ENCODE measurements at regions of chr9 and their contacts with region 1.

Region 1: DNA sequence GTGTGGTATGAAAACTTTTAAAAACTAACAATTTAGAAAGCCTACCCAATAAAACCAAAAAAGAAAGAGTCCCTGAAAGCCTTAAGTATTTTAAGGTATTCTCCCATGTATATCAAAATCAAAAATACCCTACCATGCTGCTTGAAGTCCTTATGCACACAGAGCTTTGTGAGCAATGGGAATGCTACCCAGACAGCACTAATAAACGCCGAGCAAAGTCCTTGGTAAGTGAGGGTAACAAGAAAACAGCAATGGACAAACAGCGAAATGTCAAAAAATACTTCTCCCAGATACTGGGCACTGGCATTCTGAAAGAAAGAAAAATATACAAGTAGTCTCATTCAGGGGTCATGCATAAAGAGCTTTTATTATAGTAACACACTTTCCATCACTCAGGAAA is 27.4 kb downstream of the ERMP1 start:
- DNase-seq: no peak
- ATAC-seq: no peak
- H3K4me3 Mint-ChIP-seq: no peak overlapping the region
- H3K27ac Mint-ChIP-seq: no peak overlapping the region
- H3K4me1 Mint-ChIP-seq: peaks cover 10% of the 10 kb centered on the region
- H3K27me3 Mint-ChIP-seq: no peaks in the 10 kb centered on the region

Region 2: DNA sequence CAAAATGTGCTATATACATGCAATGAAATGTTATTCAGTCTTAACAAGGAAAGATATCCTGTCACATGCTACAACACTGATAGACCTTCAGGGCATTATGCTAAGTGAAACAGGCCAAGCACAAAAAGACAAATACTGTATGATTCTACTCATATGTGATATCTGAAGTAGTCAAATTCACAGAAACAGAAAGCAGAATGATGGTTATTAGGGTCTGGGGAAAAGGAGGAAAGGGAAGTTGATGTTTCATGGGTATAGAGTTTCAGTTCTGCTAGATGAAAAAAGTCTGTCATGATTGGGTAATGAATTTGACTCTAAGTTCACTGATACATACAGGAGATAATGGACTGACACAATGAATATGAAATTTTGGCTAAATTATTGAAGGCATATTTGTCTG is 187.7 kb before region 1 on chr9:
- CTCF ChIA-PET with region 1: no interaction called
- POLR2A ChIA-PET with region 1: interaction called, 14 read pairs
- intact Hi-C with region 1: no loop called
- DNase-seq: no peak
- ATAC-seq: peak; percentile 86
- H3K4me3 Mint-ChIP-seq: no peak overlapping the region
- H3K27ac Mint-ChIP-seq: peak overlapping the region; percentile 14
- H3K4me1 Mint-ChIP-seq: peaks cover 31% of the 10 kb centered on the region
- H3K27me3 Mint-ChIP-seq: no peaks in the 10 kb centered on the region

Region 3: DNA sequence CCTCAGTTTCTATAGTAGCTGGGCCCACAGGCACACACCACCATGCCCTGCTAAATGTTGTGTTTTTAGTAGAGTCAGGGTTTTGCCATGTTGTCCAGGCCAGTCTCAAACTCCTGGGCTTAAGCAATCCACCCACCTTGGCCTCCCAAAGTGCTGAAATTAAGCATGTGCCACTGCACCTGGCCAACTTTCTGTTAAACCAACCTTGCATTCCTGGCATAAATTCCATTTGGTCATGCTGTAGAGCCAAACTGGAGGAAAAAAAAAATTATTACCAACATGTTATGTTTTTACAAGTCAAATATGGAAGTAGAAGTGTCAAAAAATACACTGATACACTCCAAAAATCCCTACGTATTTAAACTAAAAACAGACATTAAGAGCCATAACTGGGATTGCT is 26.7 kb before region 1 on chr9:
- CTCF ChIA-PET with region 1: no interaction called
- POLR2A ChIA-PET with region 1: no interaction called
- intact Hi-C with region 1: no loop called
- DNase-seq: no peak
- ATAC-seq: no peak
- H3K4me3 Mint-ChIP-seq: no peak overlapping the region
- H3K27ac Mint-ChIP-seq: no peak overlapping the region
- H3K4me1 Mint-ChIP-seq: peaks cover 5% of the 10 kb centered on the region
- H3K27me3 Mint-ChIP-seq: no peaks in the 10 kb centered on the region

Region 4: DNA sequence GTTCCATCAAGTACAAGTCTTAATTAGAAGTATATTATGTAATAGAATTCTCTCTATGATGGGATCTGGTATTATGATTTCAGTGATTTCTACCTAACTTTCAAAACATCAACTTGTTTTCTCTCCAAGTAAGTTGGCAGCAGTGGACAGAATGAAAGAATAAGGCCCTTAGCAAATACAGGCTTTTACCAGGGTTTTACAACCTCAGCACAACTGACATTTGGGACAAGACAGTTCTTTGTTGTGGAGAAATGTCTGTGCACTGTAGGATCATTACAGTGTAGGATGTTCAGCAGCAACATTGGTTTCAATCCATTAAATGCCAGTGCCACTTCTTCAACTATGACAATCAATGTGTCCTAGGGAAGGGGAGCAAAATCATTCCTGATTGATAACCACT is 134.1 kb after region 1 on chr9:
- CTCF ChIA-PET with region 1: no interaction called
- POLR2A ChIA-PET with region 1: no interaction called
- intact Hi-C with region 1: no loop called
- DNase-seq: no peak
- ATAC-seq: no peak
- H3K4me3 Mint-ChIP-seq: no peak overlapping the region
- H3K27ac Mint-ChIP-seq: no peak overlapping the region
- H3K4me1 Mint-ChIP-seq: no peaks in the 10 kb centered on the region
- H3K27me3 Mint-ChIP-seq: no peaks in the 10 kb centered on the region

Measured in activated CD4-positive, alpha-beta T cell treated with anti-CD3 and anti-CD28 coated beads for 36 hours (primary cell).